Activated CD8-positive, alpha-beta T cell treated with anti-CD3 and anti-CD28 coated beads for 36 hours (primary cell): ENCODE measurements at regions of chr3 and their contacts with region 1.

Region 1: DNA sequence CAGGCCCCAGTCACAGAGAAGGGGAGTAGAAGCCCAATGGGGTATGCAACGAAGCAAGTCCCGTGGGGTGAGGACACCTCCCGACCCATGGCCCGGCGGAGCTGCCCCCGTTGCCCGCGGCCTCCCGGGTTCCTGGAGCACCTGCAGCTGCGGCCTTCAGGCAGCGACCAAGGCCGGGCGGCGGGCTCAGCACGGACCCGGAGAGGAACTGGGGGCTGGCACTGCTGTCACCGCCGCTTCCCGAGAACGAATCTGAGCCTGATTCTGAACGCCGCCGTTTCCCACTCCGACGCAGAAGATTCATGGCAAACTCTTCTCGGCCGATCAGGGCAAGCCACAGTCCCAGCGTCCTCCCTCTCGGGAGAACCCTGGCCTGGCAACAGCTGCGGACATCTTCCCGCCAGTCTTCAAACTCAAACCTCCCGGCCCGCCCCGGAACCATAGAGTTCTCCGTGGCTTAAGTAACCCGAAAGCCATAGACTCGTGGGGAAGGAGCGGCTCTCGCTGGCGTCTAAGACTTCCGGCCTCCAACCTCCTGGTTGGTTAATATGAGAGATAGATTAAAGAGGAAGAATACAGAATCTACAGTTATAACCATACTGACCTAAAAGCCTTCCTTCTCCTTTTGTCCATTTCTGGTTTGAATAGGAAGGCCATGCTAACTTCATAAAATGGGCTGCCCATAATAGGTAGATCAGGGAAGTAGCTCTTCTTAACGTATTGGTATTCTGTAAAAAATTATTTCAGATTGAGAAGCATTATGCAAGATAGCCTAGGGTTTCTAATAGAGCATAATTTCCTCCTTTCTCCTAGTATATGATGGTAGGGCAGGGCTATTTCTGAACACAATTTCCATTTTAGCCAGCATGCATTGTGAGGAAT is at the start of gene POLQ:
- DNase-seq: peak; percentile 95
- ATAC-seq: peak; percentile 97
- H3K4me3 Mint-ChIP-seq: peak within 1 kb of the TSS; percentile 99
- H3K27ac Mint-ChIP-seq: peak within 1 kb of the TSS; percentile 89
- H3K4me1 Mint-ChIP-seq: peaks cover 7% of the 10 kb centered on the region
- H3K27me3 Mint-ChIP-seq: no peaks in the 10 kb centered on the region
- CTCF ChIP-seq: no peak
- total RNA-seq, gene POLQ: 22.0 to 23.6 TPM

Region 2: DNA sequence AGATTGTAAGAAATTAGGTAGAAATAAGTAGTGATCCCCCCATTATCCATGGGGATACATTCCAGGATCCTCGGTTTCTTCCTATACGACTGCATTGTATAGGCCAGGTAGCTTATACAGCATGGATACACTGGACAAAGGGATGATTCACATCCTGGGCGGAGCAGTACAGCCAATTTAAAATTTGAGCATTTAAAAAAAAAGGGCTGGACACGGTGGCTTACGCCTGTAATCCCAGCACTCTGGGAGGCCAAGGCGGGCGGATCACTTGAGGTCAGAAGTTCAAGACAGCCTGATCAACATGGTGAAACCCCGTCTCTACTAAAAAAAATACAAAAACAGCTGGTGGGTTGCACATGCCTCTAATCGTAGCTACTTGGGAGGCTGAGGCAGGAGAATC is 21.0 kb after region 1 on chr3:
- CTCF ChIA-PET with region 1: no interaction called
- POLR2A ChIA-PET with region 1: no interaction called
- intact Hi-C with region 1: no loop called
- DNase-seq: no peak
- ATAC-seq: no peak
- H3K4me3 Mint-ChIP-seq: no peak overlapping the region
- H3K27ac Mint-ChIP-seq: no peak overlapping the region
- H3K4me1 Mint-ChIP-seq: no peaks in the 10 kb centered on the region
- H3K27me3 Mint-ChIP-seq: no peaks in the 10 kb centered on the region
- CTCF ChIP-seq: no peak

Region 3: DNA sequence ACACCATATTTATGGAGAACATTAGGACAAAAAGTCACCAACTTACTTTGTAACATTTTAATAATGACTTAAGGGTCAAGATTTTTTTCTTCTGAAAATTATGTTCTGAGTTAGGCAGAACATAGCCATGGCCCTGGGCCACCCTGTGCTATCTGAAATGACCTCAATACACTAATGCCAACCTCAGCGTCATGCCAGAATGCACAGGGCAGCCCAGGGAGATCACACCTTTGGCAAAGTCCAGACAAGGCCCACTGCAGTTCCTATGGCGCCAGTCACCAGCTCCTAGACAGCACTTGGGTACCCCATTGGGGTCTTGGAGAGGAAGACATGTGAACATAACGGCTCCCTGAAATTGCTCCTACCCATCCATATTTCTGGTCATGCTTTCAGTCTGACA is 81.8 kb after region 1 on chr3:
- CTCF ChIA-PET with region 1: no interaction called
- POLR2A ChIA-PET with region 1: no interaction called
- intact Hi-C with region 1: no loop called
- DNase-seq: no peak
- ATAC-seq: no peak
- H3K4me3 Mint-ChIP-seq: no peak overlapping the region
- H3K27ac Mint-ChIP-seq: no peak overlapping the region
- H3K4me1 Mint-ChIP-seq: no peaks in the 10 kb centered on the region
- H3K27me3 Mint-ChIP-seq: no peaks in the 10 kb centered on the region
- CTCF ChIP-seq: no peak

Region 4: DNA sequence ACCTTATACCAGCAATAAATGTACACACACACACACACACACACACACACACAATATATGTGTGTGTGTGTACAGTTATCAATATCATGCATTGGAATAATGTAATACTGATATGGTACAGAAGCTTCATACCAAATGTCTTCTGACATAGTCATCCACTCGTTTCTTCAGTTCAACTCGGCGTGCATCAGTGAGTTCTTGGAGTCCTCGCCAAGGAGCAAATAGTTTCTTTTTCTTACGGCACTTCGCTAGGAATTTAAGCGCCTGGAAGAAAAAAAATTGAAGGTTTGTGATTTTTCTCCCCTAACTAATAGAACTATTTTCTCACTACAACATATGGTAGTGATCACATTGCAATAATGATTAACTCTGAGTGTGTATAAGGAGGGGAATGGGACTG is 235.8 kb after region 1 on chr3:
- CTCF ChIA-PET with region 1: no interaction called
- POLR2A ChIA-PET with region 1: no interaction called
- intact Hi-C with region 1: no loop called
- DNase-seq: no peak
- ATAC-seq: no peak
- H3K4me3 Mint-ChIP-seq: no peak overlapping the region
- H3K27ac Mint-ChIP-seq: no peak overlapping the region
- H3K4me1 Mint-ChIP-seq: no peaks in the 10 kb centered on the region
- H3K27me3 Mint-ChIP-seq: no peaks in the 10 kb centered on the region
- CTCF ChIP-seq: no peak

Region 5: GRCh38 chr3:121834696-121835464 is 289.1 kb after region 1 on chr3 and contains the starts of genes EAF2 and IQCB1:
- CTCF ChIA-PET with region 1: no interaction called
- POLR2A ChIA-PET with region 1: interaction called, 3 read pairs
- intact Hi-C with region 1: loop called (anchors 2 kb)
- DNase-seq: peak; percentile 97
- ATAC-seq: peak; percentile 99
- H3K4me3 Mint-ChIP-seq: peak within 1 kb of the TSS; percentile 85
- H3K27ac Mint-ChIP-seq: peak within 1 kb of the TSS; percentile 89
- H3K4me1 Mint-ChIP-seq: peaks cover 45% of the 10 kb centered on the region
- H3K27me3 Mint-ChIP-seq: no peaks in the 10 kb centered on the region
- CTCF ChIP-seq: no peak
- total RNA-seq, gene EAF2: 13.4 to 14.4 TPM
- total RNA-seq, gene IQCB1: 45.4 to 51.6 TPM

Region 6: DNA sequence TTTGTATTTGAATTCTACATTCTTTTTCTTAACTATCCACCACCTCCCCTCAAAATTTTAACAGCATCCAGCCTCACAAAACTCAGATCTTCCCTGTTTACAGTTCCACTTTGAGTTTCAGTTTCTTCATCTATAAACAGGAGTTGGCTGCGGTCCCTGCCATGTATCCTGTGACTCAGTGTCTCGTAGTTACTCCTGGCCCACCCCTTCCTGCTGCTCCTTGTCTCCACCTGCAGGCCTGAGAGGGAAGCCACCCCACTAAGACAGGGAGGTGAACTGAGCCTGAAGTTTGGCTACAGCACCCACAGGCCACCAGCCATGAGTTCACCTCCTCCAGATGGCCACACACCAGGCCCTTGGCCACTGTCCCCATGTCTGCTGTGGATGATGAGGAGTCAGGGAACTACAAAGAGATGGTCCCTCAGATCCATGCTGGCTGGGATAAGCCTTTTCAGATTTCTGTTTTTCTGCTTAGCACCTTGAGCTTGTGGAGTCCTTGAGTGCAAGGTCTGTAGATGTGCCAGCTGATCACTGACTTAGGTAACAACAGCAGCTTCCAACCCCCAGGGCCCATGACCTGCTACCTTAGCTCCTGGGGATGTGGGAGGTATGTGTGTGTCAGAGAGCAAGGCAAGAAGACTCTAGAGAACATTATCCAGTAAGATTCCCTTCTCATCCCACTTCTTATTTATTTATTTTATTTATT is 546.8 kb after region 1 on chr3:
- CTCF ChIA-PET with region 1: interaction called, 6 read pairs
- POLR2A ChIA-PET with region 1: interaction called, 3 read pairs
- intact Hi-C with region 1: loop called (anchors 2 kb)
- DNase-seq: peak; percentile 81
- ATAC-seq: peak; percentile 99
- H3K4me3 Mint-ChIP-seq: no peak overlapping the region
- H3K27ac Mint-ChIP-seq: peak overlapping the region; percentile 55
- H3K4me1 Mint-ChIP-seq: peaks cover 15% of the 10 kb centered on the region
- H3K27me3 Mint-ChIP-seq: peaks cover 2% of the 10 kb centered on the region
- CTCF ChIP-seq: peak; percentile 67

Region 7: DNA sequence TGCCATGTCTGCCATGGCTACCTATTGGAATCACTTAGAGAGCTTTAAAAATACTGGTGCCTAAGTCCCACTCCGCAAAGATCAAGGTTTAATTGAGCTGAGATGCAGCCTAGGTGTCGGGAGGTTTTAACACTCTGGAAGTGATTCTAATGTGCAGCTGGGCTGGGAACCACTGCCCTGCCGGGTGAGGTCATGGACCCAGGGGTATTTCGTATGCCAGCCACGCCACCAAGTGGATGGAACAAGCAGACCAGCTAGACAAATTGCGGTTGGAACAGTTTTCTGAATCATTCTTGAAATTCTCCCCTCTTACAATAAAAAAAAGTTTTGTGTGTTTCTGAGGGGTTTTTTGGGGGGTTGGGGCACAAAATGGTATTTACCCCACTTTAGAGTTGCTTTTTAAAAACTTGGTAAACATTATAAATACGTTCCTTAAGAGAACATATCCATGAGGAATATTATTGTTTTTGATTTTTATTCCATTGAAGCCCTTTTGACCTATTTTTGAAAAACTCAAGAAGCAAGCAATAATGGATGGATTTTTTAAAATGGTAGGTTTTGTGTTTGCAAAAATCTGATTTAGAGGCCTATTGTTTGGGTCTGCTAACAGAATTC is 713.0 kb after region 1 on chr3:
- CTCF ChIA-PET with region 1: interaction called, 8 read pairs
- POLR2A ChIA-PET with region 1: no interaction called
- intact Hi-C with region 1: loop called (anchors 5 kb)
- DNase-seq: peak; percentile 86
- ATAC-seq: peak; percentile 91
- H3K4me3 Mint-ChIP-seq: no peak overlapping the region
- H3K27ac Mint-ChIP-seq: peak overlapping the region; percentile 43
- H3K4me1 Mint-ChIP-seq: peaks cover 21% of the 10 kb centered on the region
- H3K27me3 Mint-ChIP-seq: peaks cover 3% of the 10 kb centered on the region
- CTCF ChIP-seq: peak; percentile 71